Esophagus squamous epithelium (tissue), 5 donors: ENCODE measurements at regions of chr1 and their contacts with region 1.

Region 1: GRCh38 chr1:26156704-26157038 is 2.2 kb upstream of the FAM110D start:
- DNase-seq: no peak
- H3K4me3 ChIP-seq: peak overlapping the region in 3 of 4 donors; percentile 2 to 39 (median 30)
- H3K27ac ChIP-seq: peak overlapping the region in 2 of 4 donors; percentile 69 to 72
- H3K4me1 ChIP-seq: peaks cover 11 to 33% (median 14%) of the 10 kb centered on the region in 3 donors
- H3K27me3 ChIP-seq: peaks cover 0 to 62% (median 0%) of the 10 kb centered on the region in 4 donors
- CTCF ChIP-seq: no peak
- POLR2A ChIP-seq: no peak

Region 2: GRCh38 chr1:26029471-26030135 is 127.1 kb before region 1 on chr1:
- intact Hi-C with region 1: loop called (anchors 5 kb)
- DNase-seq: no peak
- H3K4me3 ChIP-seq: no peak overlapping the region
- H3K27ac ChIP-seq: no peak overlapping the region
- H3K4me1 ChIP-seq: peaks cover 0 to 2% (median under 1%) of the 10 kb centered on the region in 3 donors
- H3K27me3 ChIP-seq: peaks cover 0 to 33% (median 0%) of the 10 kb centered on the region in 4 donors
- CTCF ChIP-seq: no peak
- POLR2A ChIP-seq: no peak